Naive thymus-derived CD8-positive, alpha-beta T cell (primary cell): ENCODE measurements at regions of chr15 and their contacts with region 1.

Region 1: GRCh38 chr15:45587095-45587860 is at the start of gene BLOC1S6:
- DNase-seq: peak; percentile 77 to 95 (median 90)
- ATAC-seq: peak; percentile 83 to 88
- H3K4me3 Mint-ChIP-seq: peak within 1 kb of the TSS; percentile 93 to 100 (median 99)
- H3K27ac Mint-ChIP-seq: peak within 1 kb of the TSS; percentile 100
- H3K4me1 Mint-ChIP-seq: peaks cover 22 to 55% (median 40%) of the 10 kb centered on the region in 4 donors
- H3K27me3 Mint-ChIP-seq: no peaks in the 10 kb centered on the region
- polyA plus RNA-seq, gene BLOC1S6: 50.9 to 62.1 (median 58.8) TPM

Region 2: GRCh38 chr15:45522328-45523160 is 64.7 kb before region 1 on chr15 and contains the start of gene SLC30A4:
- POLR2A ChIA-PET with region 1: interaction called, 25 read pairs
- DNase-seq: peak; percentile 52 to 80 (median 68)
- ATAC-seq: peak; percentile 85 to 86
- H3K4me3 Mint-ChIP-seq: peak within 1 kb of the TSS; percentile 92 to 99 (median 94)
- H3K27ac Mint-ChIP-seq: peak within 1 kb of the TSS; percentile 85 to 95 (median 89)
- H3K4me1 Mint-ChIP-seq: peaks cover 24 to 50% (median 40%) of the 10 kb centered on the region in 4 donors
- H3K27me3 Mint-ChIP-seq: no peaks in the 10 kb centered on the region
- polyA plus RNA-seq, gene SLC30A4: 1.9 to 2.9 (median 2.4) TPM

Region 3: GRCh38 chr15:45634442-45635190 is 47.3 kb after region 1 on chr15 and contains the start of gene SQOR:
- POLR2A ChIA-PET with region 1: interaction called, 23 read pairs
- DNase-seq: peak; percentile 30 to 78 (median 52)
- ATAC-seq: peak; percentile 65 to 69
- H3K4me3 Mint-ChIP-seq: peak within 1 kb of the TSS; percentile 94 to 98 (median 97)
- H3K27ac Mint-ChIP-seq: peak within 1 kb of the TSS; percentile 79 to 97 (median 92)
- H3K4me1 Mint-ChIP-seq: peaks cover 20 to 53% (median 43%) of the 10 kb centered on the region in 4 donors
- H3K27me3 Mint-ChIP-seq: no peaks in the 10 kb centered on the region
- polyA plus RNA-seq, gene SQOR: 58.6 to 68.3 (median 58.7) TPM